ENCODE measurements at regions of chr13 and their contacts with region 1.

Region 1: GRCh38 chr13:106536244-106537034 is 977 bp upstream of the EFNB2 start:
- DNase-seq: peak; percentile 74
- H3K4me3 Mint-ChIP-seq: peak overlapping the region; percentile 90
- H3K27ac Mint-ChIP-seq: no peak overlapping the region
- H3K4me1 Mint-ChIP-seq: peaks cover 17% of the 10 kb centered on the region
- H3K27me3 Mint-ChIP-seq: peaks cover 27% of the 10 kb centered on the region

Region 2: GRCh38 chr13:104773775-104774174 is 1762.7 kb before region 1 on chr13:
- intact Hi-C with region 1: loop called (anchors 2 kb)
- DNase-seq: no peak
- H3K4me3 Mint-ChIP-seq: no peak overlapping the region
- H3K27ac Mint-ChIP-seq: no peak overlapping the region
- H3K4me1 Mint-ChIP-seq: no peaks in the 10 kb centered on the region
- H3K27me3 Mint-ChIP-seq: no peaks in the 10 kb centered on the region

Region 3: GRCh38 chr13:105410602-105411001 is 1125.8 kb before region 1 on chr13:
- intact Hi-C with region 1: loop called (anchors 10 kb)
- DNase-seq: peak; percentile 8
- H3K4me3 Mint-ChIP-seq: no peak overlapping the region
- H3K27ac Mint-ChIP-seq: no peak overlapping the region
- H3K4me1 Mint-ChIP-seq: no peaks in the 10 kb centered on the region
- H3K27me3 Mint-ChIP-seq: no peaks in the 10 kb centered on the region

Region 4: DNA sequence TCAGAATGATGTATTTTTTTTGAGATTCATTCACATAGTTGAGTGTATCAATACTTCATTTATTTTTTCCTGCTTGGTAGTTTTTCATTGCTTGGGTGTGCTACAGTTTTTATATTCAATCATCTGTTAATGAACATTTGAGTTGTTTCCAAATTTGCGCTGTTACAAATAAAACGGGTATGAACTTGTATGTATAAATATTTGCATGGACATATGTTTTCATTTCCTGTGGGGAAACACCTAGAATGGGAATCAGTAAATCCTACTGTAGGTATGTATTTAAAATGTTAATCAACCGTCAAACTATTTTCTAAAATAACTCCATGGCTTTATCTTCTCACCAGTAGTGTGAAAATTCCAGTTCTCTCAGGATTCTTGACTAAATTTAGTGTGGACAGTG is 827.3 kb before region 1 on chr13:
- intact Hi-C with region 1: no loop called
- DNase-seq: no peak
- H3K4me3 Mint-ChIP-seq: no peak overlapping the region
- H3K27ac Mint-ChIP-seq: no peak overlapping the region
- H3K4me1 Mint-ChIP-seq: no peaks in the 10 kb centered on the region
- H3K27me3 Mint-ChIP-seq: no peaks in the 10 kb centered on the region

Region 5: GRCh38 chr13:106464076-106464475 is 72.4 kb before region 1 on chr13:
- intact Hi-C with region 1: no loop called
- DNase-seq: no peak
- H3K4me3 Mint-ChIP-seq: no peak overlapping the region
- H3K27ac Mint-ChIP-seq: no peak overlapping the region
- H3K4me1 Mint-ChIP-seq: no peaks in the 10 kb centered on the region
- H3K27me3 Mint-ChIP-seq: no peaks in the 10 kb centered on the region

Region 6: DNA sequence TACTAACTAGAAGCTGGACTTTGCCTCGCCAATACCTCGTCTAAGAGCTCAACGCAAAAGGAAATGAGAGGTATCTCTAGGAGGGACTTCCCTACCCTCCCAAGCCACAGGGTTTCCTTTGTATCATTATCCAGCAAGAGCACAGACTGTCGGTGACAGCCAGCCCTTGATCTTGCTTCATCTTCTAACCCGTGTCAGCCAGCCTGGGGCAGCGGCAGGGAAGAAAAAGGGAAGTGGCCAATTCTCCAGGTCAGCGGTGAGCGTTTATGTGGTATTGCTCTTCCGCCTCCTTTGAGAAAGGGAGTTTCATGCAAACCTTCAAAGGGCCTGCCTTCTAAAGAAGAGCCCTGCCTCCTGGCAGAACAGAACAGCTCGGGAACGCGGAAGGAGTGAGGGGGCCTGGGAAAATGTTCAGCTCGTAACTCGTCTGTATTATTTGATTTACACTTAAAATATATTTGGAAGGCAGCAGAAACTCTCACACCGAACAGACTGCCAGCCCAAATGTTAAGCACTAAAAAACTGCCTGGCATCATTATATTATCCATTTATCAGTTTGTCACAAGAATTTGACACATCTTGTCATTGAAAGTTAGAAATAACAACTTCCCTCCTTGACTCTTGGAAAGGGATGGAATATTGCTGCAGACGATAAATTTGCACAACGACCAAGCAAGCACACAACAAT is 42.8 kb before region 1 on chr13:
- intact Hi-C with region 1: loop called (anchors 5 kb)
- DNase-seq: no peak
- H3K4me3 Mint-ChIP-seq: no peak overlapping the region
- H3K27ac Mint-ChIP-seq: no peak overlapping the region
- H3K4me1 Mint-ChIP-seq: peaks cover 10% of the 10 kb centered on the region
- H3K27me3 Mint-ChIP-seq: peaks cover 56% of the 10 kb centered on the region

Region 7: GRCh38 chr13:106567474-106568298 is 31.2 kb after region 1 on chr13 and contains the start of gene ARGLU1:
- intact Hi-C with region 1: loop called (anchors 1 kb)
- DNase-seq: peak; percentile 94
- H3K4me3 Mint-ChIP-seq: peak within 1 kb of the TSS; percentile 93
- H3K27ac Mint-ChIP-seq: peak within 1 kb of the TSS; percentile 87
- H3K4me1 Mint-ChIP-seq: peaks cover 44% of the 10 kb centered on the region
- H3K27me3 Mint-ChIP-seq: no peaks in the 10 kb centered on the region
- total RNA-seq, gene ARGLU1: 90.4 and 92.7 TPM in 2 replicates

Region 8: GRCh38 chr13:106587787-106588186 is 51.3 kb after region 1 on chr13:
- intact Hi-C with region 1: no loop called
- DNase-seq: no peak
- H3K4me3 Mint-ChIP-seq: no peak overlapping the region
- H3K27ac Mint-ChIP-seq: no peak overlapping the region
- H3K4me1 Mint-ChIP-seq: no peaks in the 10 kb centered on the region
- H3K27me3 Mint-ChIP-seq: peaks cover 3% of the 10 kb centered on the region

Region 9: GRCh38 chr13:106917673-106918556 is 381.5 kb after region 1 on chr13:
- intact Hi-C with region 1: loop called (anchors 1 kb)
- DNase-seq: peak; percentile 67
- H3K4me3 Mint-ChIP-seq: peak overlapping the region; percentile 75
- H3K27ac Mint-ChIP-seq: no peak overlapping the region
- H3K4me1 Mint-ChIP-seq: no peaks in the 10 kb centered on the region
- H3K27me3 Mint-ChIP-seq: peaks cover 14% of the 10 kb centered on the region

Measured in activated T-helper 2 cell treated with anti-CD3 and anti-CD28 coated beads, Interferon-gamma antibody, Interleukin-2, Interleukin-4, amounts not matched to agents 10 μg/mL and 5 μg/mL and 100 μg/mL, durations not matched to agents 14 hours and 24 hours and 36 hours (primary cell).